Activated naive CD4-positive, alpha-beta T cell treated with anti-CD3 and anti-CD28 coated beads for 36 hours (primary cell): ENCODE measurements at regions of chr14 and their contacts with region 1.

Region 1: DNA sequence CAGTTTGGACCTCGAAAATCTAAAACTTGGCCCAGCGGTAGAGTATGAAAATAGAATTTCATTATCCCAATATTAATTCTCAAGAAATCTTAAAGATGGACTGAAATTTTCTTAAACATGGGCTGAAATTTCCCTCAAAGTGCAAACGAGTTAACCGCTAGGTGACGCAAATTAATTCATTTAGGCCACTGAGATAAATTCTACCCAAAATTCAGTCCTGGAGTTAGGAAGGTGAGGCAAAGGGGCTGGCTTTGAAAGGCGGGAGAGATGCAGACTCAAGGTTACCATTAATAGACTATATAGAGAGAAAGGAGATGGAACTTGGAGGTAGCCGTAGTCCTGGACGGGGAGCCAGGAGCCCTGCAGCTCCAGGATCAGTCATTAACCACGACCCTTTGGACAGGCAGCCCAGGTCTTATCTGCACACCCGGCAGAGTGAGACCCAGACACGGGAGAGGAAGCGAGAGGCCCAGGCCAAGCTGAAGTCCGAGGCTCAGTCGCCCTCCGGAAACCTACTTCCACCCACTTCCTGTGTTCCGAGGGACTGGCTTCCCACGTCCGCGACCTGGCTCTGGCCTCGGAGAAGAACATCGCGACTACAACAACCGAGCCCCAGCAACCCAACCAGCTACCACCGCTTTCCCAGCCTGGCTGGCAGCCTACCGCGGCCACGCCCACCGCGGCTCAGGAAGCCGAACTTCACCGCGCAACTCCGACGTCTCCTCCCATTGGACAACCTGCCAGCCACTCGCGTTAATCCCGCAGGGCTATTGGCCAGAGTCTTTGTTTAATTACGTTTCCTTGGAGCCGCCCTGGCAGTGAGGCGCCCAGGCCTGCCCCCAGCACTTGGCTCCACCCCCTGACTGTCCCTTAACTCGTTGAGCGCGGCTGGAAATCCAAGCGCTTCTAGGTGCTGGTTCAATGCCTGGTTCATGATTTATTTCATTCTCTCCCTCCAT is at the start of gene EFCAB11:
- DNase-seq: peak; percentile 97
- H3K4me3 Mint-ChIP-seq: peak within 1 kb of the TSS; percentile 94
- H3K27ac Mint-ChIP-seq: peak within 1 kb of the TSS; percentile 89
- H3K4me1 Mint-ChIP-seq: peaks cover 37% of the 10 kb centered on the region
- H3K27me3 Mint-ChIP-seq: no peaks in the 10 kb centered on the region
- total RNA-seq, gene EFCAB11: 7.0 to 9.5 TPM

Region 2: GRCh38 chr14:88562831-88563686 is 1391.3 kb before region 1 on chr14 and contains the start of gene ZC3H14:
- CTCF ChIA-PET with region 1: no interaction called
- intact Hi-C with region 1: loop called (anchors 2 kb)
- DNase-seq: peak; percentile 87
- H3K4me3 Mint-ChIP-seq: peak within 1 kb of the TSS; percentile 86
- H3K27ac Mint-ChIP-seq: peak within 1 kb of the TSS; percentile 82
- H3K4me1 Mint-ChIP-seq: peaks cover 28% of the 10 kb centered on the region
- H3K27me3 Mint-ChIP-seq: peaks cover 9% of the 10 kb centered on the region
- total RNA-seq, gene ZC3H14: 33.3 to 37.9 TPM

Region 3: GRCh38 chr14:89416002-89416995 is 538.0 kb before region 1 on chr14:
- CTCF ChIA-PET with region 1: no interaction called
- intact Hi-C with region 1: loop called (anchors 1 kb)
- DNase-seq: peak; percentile 98
- H3K4me3 Mint-ChIP-seq: peak overlapping the region; percentile 83
- H3K27ac Mint-ChIP-seq: peak overlapping the region; percentile 87
- H3K4me1 Mint-ChIP-seq: peaks cover 53% of the 10 kb centered on the region
- H3K27me3 Mint-ChIP-seq: no peaks in the 10 kb centered on the region

Region 4: DNA sequence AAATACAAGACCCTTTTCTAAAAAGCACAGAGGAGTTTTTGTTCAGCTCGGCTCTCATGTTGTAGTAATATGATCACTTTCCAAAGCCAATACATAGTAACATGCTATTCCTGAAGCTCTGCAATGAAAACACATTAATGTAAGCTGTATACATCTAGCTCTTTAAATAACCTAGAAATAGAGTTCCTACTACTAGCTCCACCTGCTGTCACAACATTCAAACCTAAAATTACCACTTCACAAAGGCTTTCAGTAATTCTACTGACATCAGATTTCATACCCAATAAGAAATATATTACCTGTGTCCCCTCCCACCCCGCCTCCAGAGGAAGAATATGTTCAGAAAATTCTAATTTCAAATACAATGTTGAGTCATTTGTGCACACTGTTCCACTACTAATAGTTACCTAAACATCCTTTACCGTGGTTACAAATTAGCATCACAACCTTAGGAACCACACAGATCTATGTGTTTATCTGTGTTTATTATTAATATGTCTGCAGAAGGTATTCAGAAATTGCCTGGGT is 17.6 kb before region 1 on chr14:
- CTCF ChIA-PET with region 1: interaction called, 70 read pairs
- intact Hi-C with region 1: loop called (anchors 1 kb)
- DNase-seq: no peak
- H3K4me3 Mint-ChIP-seq: no peak overlapping the region
- H3K27ac Mint-ChIP-seq: no peak overlapping the region
- H3K4me1 Mint-ChIP-seq: peaks cover under 1% of the 10 kb centered on the region
- H3K27me3 Mint-ChIP-seq: no peaks in the 10 kb centered on the region

Region 5: GRCh38 chr14:90256354-90257131 is 302.2 kb after region 1 on chr14 and contains the start of gene PSMC1:
- CTCF ChIA-PET with region 1: interaction called, 3 read pairs
- intact Hi-C with region 1: loop called (anchors 1 kb)
- DNase-seq: peak; percentile 96
- H3K4me3 Mint-ChIP-seq: peak within 1 kb of the TSS; percentile 98
- H3K27ac Mint-ChIP-seq: peak within 1 kb of the TSS; percentile 93
- H3K4me1 Mint-ChIP-seq: peaks cover 32% of the 10 kb centered on the region
- H3K27me3 Mint-ChIP-seq: peaks cover 3% of the 10 kb centered on the region
- total RNA-seq, gene PSMC1: 102 to 105 TPM

Region 6: GRCh38 chr14:90677484-90678050 is 723.2 kb after region 1 on chr14:
- CTCF ChIA-PET with region 1: no interaction called
- intact Hi-C with region 1: loop called (anchors 10 kb)
- DNase-seq: peak; percentile 37
- H3K4me3 Mint-ChIP-seq: peak overlapping the region; percentile 16
- H3K27ac Mint-ChIP-seq: peak overlapping the region; percentile 82
- H3K4me1 Mint-ChIP-seq: peaks cover 38% of the 10 kb centered on the region
- H3K27me3 Mint-ChIP-seq: no peaks in the 10 kb centered on the region

Region 7: DNA sequence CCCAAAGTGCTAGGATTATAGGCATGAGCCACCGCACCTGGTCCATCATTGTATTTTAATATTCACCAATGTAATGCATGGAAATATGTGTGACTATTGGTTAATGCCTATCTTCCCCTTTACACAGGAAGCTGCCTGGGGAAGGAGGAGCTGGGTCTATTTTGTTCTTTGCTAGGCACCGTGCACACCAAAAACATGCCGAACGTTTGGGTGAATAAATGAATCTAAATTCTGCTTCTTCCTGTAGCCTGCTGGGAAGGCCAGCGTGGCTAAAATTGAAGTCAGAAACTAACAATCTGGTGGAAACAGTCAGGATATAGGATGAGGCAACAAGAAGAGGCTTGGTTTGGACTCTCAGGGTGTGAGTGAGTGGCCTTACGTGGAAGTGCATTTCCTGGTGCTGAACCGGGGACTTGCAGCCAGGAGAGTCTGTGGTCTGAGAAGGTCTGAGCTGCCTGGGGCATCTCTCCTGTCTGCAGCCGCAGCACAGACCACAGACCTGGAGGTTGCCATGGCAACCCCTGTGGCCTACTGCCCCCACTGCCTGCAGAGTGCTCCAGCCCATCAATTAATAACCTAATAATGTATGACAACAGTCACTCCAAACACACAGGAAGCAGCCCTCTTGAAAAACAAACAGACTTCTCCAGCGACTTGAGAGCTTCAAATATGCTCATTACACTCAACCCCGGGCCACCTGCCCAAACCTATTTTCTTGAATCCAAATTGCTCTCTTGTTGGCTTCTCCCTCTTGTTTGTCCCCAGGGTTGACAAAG is 1295.7 kb after region 1 on chr14:
- CTCF ChIA-PET with region 1: no interaction called
- intact Hi-C with region 1: loop called (anchors 10 kb)
- DNase-seq: peak; percentile 42
- H3K4me3 Mint-ChIP-seq: no peak overlapping the region
- H3K27ac Mint-ChIP-seq: peak overlapping the region; percentile 70
- H3K4me1 Mint-ChIP-seq: peaks cover 81% of the 10 kb centered on the region
- H3K27me3 Mint-ChIP-seq: no peaks in the 10 kb centered on the region